Panc1 (cell line): ENCODE measurements at regions of chr1 and their contacts with region 1.

Region 1: DNA sequence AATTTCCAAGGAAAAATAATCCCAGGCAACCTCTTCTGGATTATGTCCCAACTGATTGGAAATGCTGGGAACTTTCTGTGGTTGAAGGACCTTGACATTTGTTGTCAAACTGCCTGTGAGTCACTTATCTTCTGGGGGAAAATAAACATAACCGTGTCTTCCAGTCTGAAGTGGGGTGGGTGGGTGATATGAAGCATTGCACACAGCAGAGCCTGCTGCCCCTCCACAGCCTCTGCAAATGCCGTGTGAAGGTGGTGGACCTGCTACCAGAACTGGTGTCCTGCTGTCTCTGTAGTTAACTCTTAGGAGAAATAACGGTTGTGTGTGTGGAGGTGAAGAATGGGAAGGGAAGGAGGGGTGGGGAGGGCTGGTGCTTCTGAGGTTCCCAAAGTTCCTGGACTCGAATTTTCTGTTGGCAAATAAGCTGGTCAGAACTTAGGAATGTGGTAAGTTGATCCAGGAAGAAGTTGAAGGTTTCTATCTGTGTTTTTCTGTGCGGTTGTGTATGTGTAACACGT is 23.2 kb downstream of the GALNT2 start:
- DNase-seq: no peak
- ATAC-seq: peak; percentile 42
- H3K4me3 ChIP-seq: no peak overlapping the region
- H3K27ac ChIP-seq: peak overlapping the region; percentile 49
- H3K4me1 ChIP-seq: peaks cover 44% of the 10 kb centered on the region
- H3K27me3 ChIP-seq: no peaks in the 10 kb centered on the region
- CTCF ChIP-seq: no peak

Region 2: GRCh38 chr1:229716069-229716468 is 374.2 kb before region 1 on chr1:
- CTCF ChIA-PET with region 1: no interaction called
- POLR2A ChIA-PET with region 1: interaction called, 10 read pairs
- in situ Hi-C with region 1: no loop called
- intact Hi-C with region 1: no loop called
- DNase-seq: no peak
- ATAC-seq: no peak
- H3K4me3 ChIP-seq: no peak overlapping the region
- H3K27ac ChIP-seq: no peak overlapping the region
- H3K4me1 ChIP-seq: no peaks in the 10 kb centered on the region; the same call in 1 of the 2 replicates
- H3K27me3 ChIP-seq: no peaks in the 10 kb centered on the region
- CTCF ChIP-seq: no peak